ENCODE measurements at regions of chr3 and their contacts with region 1.

Region 1: DNA sequence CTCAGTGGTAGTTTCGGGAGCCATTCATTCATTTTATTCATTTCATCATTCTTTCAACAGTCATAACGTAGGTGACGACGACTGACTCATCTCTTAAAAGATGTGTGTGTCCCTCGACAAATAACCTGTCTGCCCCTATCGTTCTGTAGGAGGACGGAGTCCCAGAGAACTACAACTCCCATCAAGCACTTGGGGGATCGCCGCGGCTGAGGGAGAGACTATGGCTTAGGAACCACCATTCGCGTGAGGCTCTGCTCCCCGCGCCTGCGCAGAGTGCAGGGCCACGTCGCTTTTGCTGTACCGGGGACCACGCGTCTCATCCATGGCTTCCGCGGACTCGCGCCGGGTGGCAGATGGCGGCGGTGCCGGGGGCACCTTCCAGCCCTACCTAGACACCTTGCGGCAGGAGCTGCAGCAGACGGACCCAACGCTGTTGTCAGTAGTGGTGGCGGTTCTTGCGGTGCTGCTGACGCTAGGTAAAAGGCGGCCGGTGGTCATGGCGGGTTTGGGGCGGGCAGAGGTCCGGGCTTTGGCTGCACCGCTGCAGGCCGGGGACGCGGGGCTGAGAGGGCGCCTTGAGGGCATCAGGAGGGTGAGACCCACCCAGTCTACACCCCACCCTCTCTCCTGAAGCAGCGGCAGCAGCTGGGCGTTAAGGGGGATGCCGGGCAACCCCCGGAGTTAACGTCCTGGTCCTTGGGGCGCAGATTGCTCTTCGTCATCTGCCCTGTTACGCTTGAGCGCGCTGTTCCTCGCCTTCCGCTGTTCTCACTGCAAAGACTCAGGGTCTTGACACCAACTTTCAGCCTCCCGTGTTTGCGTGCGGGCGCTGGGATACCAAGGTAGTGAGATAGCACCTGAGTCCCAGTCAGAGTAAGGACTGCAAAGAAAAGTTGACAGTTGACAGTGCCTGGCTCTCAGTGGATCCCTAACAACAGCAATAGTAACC is at the start of gene SRPRB:
- DNase-seq: peak; percentile 96
- H3K4me3 ChIP-seq: peak within 1 kb of the TSS; percentile 87
- H3K27ac ChIP-seq: peak within 1 kb of the TSS; percentile 28
- H3K4me1 ChIP-seq: peaks cover 23% of the 10 kb centered on the region
- CTCF ChIP-seq: no peak
- total RNA-seq, gene SRPRB: 36.0 and 39.4 TPM in 2 replicates

Region 2: DNA sequence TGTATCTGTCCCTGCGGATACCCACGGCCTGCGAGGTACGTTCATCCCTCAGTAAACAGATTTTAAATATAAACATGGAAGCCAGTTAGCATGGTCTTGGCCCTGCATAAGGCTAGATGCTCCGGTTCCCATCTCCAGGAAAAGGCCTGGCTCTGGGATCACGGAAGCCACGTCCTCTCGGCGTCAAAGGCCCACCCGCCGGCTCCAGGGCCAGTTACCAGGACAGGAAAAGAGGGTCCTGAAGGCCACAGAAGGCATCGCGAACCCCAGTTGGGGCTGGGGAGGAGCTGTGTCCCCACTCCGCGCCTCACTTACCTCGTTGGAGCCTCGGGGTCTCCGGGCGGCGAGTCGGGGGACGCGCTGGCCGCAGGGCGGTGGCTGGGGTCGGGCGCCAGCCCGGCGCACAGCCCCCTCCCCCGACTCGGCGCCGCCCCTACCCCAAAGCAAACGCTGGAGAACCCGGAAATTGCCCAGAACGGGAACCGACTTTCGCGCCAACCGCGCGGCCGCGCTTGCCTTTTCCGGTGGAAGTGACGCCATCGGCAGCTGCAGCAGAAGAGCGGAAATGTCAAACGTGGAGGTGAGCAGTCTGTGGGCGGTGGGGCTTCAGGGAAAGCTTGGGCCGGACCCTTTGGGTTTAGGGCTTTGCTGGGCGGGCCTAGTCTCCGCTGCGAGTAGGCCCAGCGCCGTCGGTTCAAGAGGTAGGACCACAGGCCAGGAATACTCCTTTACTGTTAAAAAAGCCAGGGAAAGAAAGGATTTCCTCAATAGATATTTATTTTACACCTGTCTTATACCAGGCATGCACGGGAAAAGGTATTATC is 144.1 kb before region 1 on chr3 and contains the start of gene TOPBP1:
- CTCF ChIA-PET with region 1: no interaction called
- POLR2A ChIA-PET with region 1: no interaction called
- intact Hi-C with region 1: loop called (anchors 2 kb)
- DNase-seq: peak; percentile 92
- H3K4me3 ChIP-seq: peak within 1 kb of the TSS; percentile 99
- H3K27ac ChIP-seq: peak within 1 kb of the TSS; percentile 76
- H3K4me1 ChIP-seq: peaks cover 39% of the 10 kb centered on the region
- CTCF ChIP-seq: no peak
- total RNA-seq, gene TOPBP1: 139 and 167 TPM in 2 replicates

Region 3: DNA sequence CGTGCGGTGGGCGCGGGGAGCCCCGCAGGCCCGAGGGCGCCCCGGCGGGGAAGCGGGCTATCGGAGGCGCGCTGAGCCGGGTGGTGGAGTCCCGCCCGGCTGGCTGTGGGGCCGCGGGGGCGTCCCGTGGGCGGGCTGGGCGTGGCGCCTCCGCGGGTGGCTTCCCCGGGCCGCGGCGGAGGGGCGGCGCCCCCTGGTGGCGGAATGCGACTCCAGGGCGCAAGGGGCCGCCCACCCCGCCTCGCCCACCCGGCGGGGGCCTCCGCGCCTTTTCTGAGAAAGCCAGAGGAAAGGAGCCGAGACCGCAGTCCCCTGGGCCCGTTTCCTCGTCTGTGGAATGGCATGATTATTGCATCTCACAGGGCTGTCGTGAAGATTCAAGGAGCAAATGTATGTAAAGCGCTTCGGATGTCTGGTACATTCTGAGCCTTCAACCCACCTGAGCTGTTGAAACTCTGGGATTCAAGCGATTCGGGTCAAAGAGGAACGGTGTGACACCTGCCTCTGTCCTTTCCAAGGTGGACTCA is 121.8 kb after region 1 on chr3:
- CTCF ChIA-PET with region 1: no interaction called
- POLR2A ChIA-PET with region 1: no interaction called
- intact Hi-C with region 1: no loop called
- DNase-seq: peak; percentile 45
- H3K4me3 ChIP-seq: no peak overlapping the region
- H3K27ac ChIP-seq: no peak overlapping the region
- H3K4me1 ChIP-seq: no peaks in the 10 kb centered on the region
- CTCF ChIP-seq: peak; percentile 72

Measured in OCI-LY7 (cell line).